AG04450 (cell line): ENCODE measurements at regions of chr3 and their contacts with region 1.

Region 1: DNA sequence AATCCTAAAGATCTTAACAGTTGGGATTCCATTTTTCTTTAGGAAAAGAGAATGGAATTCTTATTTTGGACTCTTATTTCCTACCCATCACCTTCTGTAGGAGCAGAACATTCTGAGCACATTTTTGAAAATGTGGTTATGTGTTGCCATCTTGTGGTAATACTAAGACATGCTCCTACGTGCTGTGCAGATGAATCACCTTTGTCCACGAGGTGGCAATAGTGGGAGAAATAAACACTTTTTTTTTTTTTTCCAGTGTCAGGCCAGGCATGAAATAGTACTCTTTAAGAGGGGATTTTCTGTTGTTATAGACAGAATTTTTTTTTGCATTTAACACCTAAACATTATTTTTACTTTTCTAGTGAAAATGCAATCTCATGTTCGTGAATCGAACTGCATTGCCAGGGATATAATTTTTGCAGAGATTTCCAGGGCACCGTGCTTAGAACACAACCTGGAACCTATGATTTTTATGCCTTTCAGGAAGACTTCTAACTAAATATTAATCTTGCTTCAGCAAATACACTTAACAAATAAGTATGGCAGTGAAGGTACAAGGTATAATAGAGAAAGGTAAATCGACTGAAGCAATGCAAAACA is 196.6 kb downstream of the GAP43 start:
- DNase-seq: peak; percentile 74
- H3K4me3 ChIP-seq: no peak overlapping the region
- H3K27ac ChIP-seq: no peak overlapping the region
- H3K27me3 ChIP-seq: no peaks in the 10 kb centered on the region
- CTCF ChIP-seq: peak; percentile 96

Region 2: DNA sequence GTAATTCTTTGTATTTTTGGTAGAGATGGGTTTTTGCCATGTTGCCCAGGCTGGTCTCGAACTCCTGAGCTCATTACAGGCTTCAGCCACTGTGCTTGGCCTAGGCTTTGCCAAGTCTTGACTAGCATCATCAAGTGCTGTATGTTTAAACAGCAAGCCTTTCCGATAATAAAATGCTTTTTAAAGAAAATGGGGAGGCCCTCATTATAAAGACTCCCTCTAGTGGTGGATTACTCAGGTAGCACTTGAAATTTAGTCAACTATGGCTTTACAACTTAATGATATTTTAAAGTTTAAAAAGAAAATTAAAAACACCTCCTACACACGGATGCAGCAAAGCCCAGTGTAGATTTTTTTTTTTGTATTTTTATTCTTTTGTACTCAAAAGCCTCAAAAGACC is 17.1 kb after region 1 on chr3:
- CTCF ChIA-PET with region 1: interaction called, 35 read pairs
- POLR2A ChIA-PET with region 1: no interaction called
- DNase-seq: no peak
- H3K4me3 ChIP-seq: no peak overlapping the region
- H3K27ac ChIP-seq: no peak overlapping the region
- H3K27me3 ChIP-seq: no peaks in the 10 kb centered on the region
- CTCF ChIP-seq: peak; percentile 66

Region 3: GRCh38 chr3:115922681-115923347 is 102.9 kb after region 1 on chr3:
- CTCF ChIA-PET with region 1: interaction called, 12 read pairs
- POLR2A ChIA-PET with region 1: no interaction called
- DNase-seq: peak; percentile 10
- H3K4me3 ChIP-seq: no peak overlapping the region
- H3K27ac ChIP-seq: no peak overlapping the region
- H3K27me3 ChIP-seq: no peaks in the 10 kb centered on the region
- CTCF ChIP-seq: peak; percentile 73